ENCODE measurements at regions of chr16 and their contacts with region 1.

Region 1: DNA sequence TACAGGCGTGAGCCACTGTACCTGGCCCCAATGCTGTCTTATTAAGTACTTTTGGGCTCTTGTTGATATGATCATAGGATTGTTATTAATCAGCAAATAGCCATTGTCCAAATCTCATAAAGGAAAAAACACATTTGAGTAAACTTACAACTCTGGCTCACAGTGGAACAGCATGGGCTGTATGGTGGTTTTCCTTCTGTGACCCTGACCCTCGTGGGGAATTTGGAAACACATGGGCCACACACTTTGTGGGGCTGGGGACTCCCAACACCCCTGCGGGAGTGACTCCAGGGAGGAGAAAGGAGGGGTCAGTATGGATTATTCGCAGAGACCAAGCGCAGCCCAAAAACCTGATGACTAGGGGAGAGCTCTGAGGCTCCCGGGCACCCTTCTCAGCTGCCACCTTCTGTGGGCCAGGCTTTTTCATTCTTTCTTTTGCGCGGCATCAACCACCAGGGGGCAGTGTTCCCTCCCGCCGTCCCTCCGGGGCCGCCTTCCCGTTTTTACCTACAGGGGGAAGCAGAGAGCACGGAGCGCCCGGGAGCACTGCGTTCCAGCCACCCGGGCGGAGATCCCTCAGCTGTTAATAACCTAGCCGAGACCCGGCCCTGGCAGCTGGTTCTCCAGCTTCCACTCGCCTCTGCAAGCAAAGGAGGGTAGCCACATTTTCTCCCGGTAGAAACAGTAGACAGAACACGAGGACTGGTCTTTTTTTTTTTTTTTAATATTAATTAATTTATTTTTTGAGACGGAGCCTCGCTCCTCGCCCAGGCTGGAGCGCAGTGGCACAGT is 9.7 kb downstream of the TSNAXIP1 start:
- DNase-seq: peak; percentile 77
- ATAC-seq: peak; percentile 97
- H3K4me3 ChIP-seq: no peak overlapping the region
- H3K27ac ChIP-seq: no peak overlapping the region
- H3K4me1 ChIP-seq: no peaks in the 10 kb centered on the region
- H3K27me3 ChIP-seq: no peaks in the 10 kb centered on the region
- CTCF ChIP-seq: peak; percentile 97

Region 2: DNA sequence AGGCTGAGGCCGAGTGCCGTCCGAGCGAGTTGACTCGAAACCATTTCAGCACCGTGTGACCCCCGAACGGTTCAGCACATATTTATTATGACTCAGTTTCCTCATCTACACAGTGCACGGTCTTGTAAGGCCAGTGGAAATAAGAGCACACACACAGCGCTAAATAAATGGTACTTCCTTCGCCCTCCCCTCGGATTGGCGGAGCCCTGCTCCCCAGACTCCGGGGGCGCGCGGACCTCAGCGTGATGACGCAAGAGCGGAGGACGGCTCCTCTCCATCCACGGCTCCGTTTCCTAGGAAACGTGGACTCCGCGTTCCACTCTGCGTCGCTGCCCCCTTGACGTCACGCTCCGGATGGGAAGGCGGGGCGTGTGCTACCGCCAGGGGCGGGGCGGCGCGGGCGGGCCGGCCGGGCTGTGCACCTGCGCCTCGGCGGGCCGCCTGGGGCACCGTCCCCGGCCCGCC is 155.8 kb before region 1 on chr16 and contains the start of gene PARD6A:
- CTCF ChIA-PET with region 1: no interaction called
- POLR2A ChIA-PET with region 1: interaction called, 19 read pairs
- intact Hi-C with region 1: no loop called
- DNase-seq: peak; percentile 95
- ATAC-seq: peak; percentile 81
- H3K4me3 ChIP-seq: peak within 1 kb of the TSS; percentile 91
- H3K27ac ChIP-seq: peak within 1 kb of the TSS; percentile 70
- H3K4me1 ChIP-seq: peaks cover 6% of the 10 kb centered on the region; the same call in 1 of the 2 replicates
- H3K27me3 ChIP-seq: no peaks in the 10 kb centered on the region
- CTCF ChIP-seq: no peak
- total RNA-seq, gene PARD6A: 15.1 and 16.4 TPM in 2 replicates

Region 3: DNA sequence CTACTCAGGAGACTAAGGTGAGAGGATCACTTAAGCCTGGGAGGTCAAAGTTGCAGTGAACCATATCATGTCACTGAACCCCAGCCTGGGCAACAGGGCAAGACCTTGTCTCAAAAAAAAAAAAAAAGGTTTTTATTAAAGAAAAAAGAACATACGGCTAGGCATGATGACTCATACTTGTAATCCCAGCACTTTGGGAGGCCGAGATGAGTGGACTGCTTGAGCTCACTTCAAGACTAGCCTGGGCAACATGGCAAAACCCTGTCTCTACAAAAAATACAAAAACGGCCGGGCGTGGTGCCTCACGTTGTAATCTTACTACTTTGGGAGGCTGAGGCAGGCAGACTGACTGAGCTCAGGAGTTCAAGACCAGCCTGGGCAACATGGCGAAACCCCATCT is 48.5 kb before region 1 on chr16:
- CTCF ChIA-PET with region 1: no interaction called
- POLR2A ChIA-PET with region 1: no interaction called
- intact Hi-C with region 1: no loop called
- DNase-seq: peak; percentile 9
- ATAC-seq: peak; percentile 48; the same call in 1 of the 2 replicates
- H3K4me3 ChIP-seq: no peak overlapping the region
- H3K27ac ChIP-seq: no peak overlapping the region
- H3K4me1 ChIP-seq: no peaks in the 10 kb centered on the region
- H3K27me3 ChIP-seq: no peaks in the 10 kb centered on the region
- CTCF ChIP-seq: no peak

Region 4: GRCh38 chr16:67865316-67865715 is 48.9 kb after region 1 on chr16:
- CTCF ChIA-PET with region 1: interaction called, 18 read pairs
- POLR2A ChIA-PET with region 1: interaction called, 5 read pairs
- intact Hi-C with region 1: no loop called
- DNase-seq: peak; percentile 45
- ATAC-seq: peak; percentile 56
- H3K4me3 ChIP-seq: no peak overlapping the region
- H3K27ac ChIP-seq: no peak overlapping the region
- H3K4me1 ChIP-seq: peaks cover 13% of the 10 kb centered on the region
- H3K27me3 ChIP-seq: no peaks in the 10 kb centered on the region
- CTCF ChIP-seq: peak; percentile 64

Region 5: DNA sequence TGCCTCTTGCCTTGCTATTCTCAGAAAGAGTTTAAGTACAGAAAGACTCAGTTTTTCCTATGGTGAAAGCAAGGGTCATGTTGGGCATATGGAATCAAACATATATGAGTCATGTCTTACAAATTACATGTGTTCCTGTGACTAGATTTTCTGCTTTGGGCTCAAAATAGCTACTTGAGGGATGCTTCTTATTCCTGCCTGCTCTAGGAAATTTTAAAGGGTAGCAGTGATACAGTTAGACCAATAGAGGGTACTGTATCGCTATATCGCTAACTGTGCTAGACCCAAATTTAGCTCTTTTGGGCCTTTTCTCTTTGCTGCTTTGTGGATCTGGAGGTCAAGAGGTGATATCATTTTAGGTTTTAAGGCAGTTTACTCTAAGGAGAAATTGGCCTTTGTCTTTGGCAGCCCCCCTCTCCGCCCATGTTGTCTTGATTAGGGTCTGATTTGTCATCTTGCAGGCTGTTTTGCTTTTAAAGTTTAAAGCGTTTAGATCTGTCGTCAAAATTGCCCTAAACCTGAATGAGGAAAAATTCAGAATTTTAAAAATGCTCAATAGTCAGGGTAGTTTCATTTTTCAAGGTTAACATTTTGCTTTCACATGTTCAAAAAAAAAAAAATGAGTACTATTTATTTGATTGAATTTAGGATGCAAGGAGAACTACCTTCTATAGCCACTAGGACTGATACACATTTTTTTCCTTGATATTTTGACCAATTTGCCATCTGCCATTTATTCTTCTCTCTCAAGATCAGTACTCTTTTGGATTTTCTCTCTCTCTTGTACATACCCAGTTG is 277.6 kb after region 1 on chr16:
- CTCF ChIA-PET with region 1: no interaction called
- POLR2A ChIA-PET with region 1: no interaction called
- intact Hi-C with region 1: no loop called
- DNase-seq: peak; percentile 32
- ATAC-seq: peak; percentile 53; the same call in 1 of the 2 replicates
- H3K4me3 ChIP-seq: no peak overlapping the region
- H3K27ac ChIP-seq: no peak overlapping the region
- H3K4me1 ChIP-seq: no peaks in the 10 kb centered on the region
- H3K27me3 ChIP-seq: no peaks in the 10 kb centered on the region
- CTCF ChIP-seq: peak; percentile 48